Left colon (tissue), 2 donors: ENCODE measurements at regions of chr17 and their contacts with region 1.

Region 1: DNA sequence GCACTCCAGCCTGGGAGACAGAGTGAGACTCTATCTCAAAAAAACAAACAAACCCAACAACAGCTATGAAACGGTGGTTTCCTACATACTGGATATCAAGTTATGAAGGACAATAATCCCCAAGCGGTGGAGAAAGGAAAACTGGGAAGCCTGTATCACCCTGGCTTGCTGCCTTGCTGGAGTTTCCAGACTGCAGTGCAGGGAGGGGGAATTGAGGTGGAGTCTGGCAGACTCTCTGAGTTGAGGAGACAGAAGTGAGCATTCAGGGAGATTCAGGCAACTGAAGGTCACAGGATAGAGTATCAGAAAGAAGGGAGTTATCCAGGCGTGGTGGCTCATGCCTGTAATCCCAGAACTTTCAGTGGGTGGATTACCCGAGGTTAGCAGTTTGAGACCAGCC is 11.9 kb downstream of the QRICH2 start:
- DNase-seq: no peak
- ATAC-seq: peak; percentile 45

Region 2: DNA sequence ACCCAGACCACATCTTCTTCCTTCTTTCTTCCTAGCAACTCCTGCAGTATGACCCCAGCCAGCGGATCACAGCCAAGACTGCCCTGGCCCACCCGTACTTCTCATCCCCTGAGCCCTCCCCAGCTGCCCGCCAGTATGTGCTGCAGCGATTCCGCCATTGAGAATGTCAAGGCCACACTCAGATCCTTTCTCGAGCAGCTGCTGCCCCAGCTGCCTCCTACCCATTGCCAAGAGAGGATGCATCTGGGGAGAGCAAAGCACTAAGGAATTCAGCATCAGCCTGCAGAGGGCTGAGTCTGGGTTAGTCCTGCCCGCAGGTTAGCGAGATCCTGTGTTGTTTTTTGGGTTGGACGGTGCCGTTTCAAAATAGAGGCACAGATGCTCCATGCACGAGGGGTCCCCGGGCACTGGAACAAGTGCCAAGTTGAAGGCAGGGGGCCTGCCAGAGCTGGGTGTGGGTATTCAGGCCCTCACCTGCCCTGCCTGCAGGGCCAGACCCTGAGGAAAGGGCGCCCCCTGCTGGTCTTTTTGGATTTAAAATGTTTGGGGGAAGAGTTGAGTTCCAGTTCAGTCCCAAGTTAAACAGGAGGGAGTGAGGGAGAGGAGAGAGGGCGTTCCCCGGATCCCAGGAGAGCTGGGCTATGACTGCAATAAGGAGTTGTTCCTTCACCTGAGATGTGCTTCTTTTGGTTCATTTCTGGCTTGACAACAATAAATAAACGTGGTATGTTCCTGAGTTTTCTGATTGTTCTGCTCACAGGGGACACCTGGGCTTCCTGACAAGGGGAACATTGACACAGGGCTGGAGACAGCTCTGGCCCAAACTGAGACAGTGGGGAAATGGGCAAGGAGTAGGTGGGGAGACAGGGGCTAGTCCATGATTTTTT is 290.7 kb before region 1 on chr17:
- intact Hi-C with region 1: loop called in 1 of 2 experiments (anchors 10 kb)
- DNase-seq: peak; percentile 78 to 91
- ATAC-seq: peak; percentile 50

Region 3: GRCh38 chr17:76103274-76104139 is 192.7 kb before region 1 on chr17 and contains the start of gene EXOC7:
- intact Hi-C with region 1: no loop called
- DNase-seq: peak; percentile 88 to 93
- ATAC-seq: peak; percentile 90
- total RNA-seq, gene EXOC7: 100 to 102 TPM

Region 4: DNA sequence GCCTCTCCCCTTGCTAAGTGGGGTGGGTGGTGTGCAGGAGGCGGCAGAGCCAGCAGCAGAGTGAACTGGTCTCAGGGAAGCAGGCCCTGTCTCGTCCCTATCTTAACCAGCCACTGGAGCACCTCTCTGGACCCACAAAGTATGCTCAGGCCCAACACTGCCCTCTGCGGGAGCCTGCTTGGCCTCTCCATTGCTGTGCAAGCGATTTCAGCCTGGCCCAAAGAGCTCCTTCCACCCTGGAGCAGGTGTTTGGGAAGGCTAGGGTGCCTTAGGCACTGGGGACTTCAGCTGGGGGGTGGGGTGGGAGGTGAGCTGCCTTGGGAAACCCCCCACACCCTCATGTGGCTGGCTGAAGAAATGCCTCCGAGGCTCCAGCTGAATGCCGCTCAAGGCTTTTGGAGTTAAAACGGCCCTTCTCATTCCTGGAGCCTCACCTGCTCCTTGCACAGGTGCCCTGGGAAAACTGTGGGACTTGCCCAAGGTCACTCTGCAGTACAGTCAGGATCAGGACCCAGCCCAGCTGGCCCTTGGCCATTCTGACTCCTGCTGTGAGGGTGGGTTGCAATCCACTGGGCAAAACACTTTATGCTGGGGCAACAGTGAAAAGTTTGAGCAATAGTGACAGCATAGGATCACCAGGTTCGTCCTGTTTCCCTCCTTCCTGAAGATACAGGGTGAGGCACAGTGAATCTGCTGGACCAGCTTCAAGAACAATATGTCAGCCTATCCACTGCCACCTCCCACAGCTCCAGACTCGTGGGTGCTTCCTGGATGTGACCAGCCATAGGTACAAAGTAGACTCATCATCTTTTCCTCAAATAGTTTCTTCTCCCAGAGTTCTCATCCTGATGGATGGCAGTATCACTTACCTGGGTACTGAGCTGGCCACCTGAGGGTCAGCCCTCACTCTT is 162.6 kb after region 1 on chr17:
- intact Hi-C with region 1: no loop called
- DNase-seq: peak in 1 of 2 donors; percentile 72
- ATAC-seq: peak; percentile 87

Region 5: DNA sequence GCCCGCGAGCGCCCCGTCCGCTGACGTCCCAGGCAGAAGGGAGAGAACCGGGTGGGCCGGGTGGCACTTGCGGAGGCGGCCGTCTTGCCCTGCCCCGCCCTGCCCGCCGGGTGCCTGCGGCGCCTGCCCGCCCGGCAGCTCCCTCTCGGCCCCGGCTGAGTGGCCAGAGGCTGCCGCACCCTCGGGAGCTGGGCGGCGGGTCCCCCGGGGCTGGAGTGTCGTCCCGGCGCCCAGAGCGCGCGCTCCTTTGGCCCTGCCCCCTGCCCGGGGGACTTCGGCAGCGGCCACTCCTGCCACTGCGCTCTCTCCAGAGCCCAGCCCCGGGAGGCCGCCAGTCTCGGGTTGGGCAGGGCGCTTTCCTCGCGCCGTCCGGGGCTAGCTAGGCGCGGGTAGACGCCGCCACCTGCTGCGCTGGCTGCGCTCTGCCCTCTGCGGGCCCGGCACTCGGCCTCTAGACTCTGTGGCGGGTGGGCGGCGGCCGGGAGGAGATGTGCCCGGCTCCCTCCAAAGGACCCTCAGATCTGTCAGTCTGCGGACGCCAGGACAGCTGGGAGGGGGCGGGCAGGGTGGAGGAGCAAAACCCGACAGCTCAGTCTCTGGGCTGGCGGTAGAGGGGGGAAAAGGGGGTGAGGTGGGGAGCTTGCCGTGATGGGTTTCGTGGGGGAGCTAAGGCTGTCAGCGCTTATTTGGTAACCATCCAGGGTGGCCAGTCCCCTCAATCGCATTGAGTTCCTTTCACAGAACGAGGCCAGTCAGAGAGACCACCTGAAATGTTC is 289.8 kb after region 1 on chr17 and contains the start of gene ST6GALNAC2:
- intact Hi-C with region 1: no loop called
- DNase-seq: peak; percentile 70 to 73
- ATAC-seq: peak; percentile 91
- total RNA-seq, gene ST6GALNAC2: 3.9 to 4.5 TPM